Activated CD4-positive, alpha-beta memory T cell treated with anti-CD3 and anti-CD28 coated beads, Interleukin-2, amount 10 ng/mL, durations not matched to agents 7 days and 5 days (primary cell): ENCODE measurements at regions of chr16 and their contacts with region 1.

Region 1: DNA sequence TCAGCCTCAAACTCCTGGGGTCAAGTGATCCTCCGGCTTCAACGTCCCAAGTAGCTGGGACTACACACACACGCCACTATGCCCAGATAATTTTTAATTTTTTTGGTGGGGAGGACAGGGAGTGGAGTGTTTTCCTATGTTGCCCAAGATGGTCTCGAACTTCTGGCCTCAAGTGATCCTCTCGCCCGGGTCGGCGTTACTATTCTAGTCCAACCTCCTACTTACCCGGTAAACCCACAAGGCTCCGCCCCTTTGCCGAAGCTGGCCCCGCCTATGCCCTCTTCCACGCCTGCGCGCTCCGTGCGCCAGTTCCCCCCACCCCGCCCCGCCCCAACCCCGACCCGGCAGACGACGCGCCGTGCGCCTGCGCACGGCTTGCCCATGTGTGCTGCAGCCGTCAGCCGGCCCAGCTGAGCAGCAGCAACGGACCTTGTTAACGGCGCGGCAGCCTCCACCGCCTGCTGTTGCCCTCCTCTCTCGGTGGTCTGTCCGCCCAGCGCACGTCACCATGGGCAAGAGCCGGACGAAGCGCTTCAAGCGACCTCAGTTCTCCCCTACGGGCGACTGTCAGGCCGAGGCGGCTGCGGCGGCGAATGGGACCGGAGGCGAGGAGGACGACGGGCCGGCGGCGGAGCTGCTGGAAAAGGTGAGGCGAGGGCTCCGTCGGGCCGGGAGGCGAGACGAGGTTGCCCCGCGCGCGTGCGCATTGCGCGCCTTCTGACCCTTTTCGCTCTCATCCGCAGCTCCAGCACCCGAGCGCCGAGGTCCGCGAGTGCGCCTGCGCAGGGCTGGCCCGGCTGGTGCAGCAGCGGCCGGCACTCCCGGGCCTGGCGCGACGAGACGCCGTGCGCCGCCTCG is at the start of gene HEATR3:
- DNase-seq: peak; percentile 96
- H3K4me3 Mint-ChIP-seq: peak within 1 kb of the TSS; percentile 87
- H3K27ac Mint-ChIP-seq: peak within 1 kb of the TSS; percentile 92
- H3K4me1 Mint-ChIP-seq: peaks cover 42% of the 10 kb centered on the region
- H3K27me3 Mint-ChIP-seq: no peaks in the 10 kb centered on the region
- total RNA-seq, gene HEATR3: 20.7 to 21.3 TPM

Region 2: DNA sequence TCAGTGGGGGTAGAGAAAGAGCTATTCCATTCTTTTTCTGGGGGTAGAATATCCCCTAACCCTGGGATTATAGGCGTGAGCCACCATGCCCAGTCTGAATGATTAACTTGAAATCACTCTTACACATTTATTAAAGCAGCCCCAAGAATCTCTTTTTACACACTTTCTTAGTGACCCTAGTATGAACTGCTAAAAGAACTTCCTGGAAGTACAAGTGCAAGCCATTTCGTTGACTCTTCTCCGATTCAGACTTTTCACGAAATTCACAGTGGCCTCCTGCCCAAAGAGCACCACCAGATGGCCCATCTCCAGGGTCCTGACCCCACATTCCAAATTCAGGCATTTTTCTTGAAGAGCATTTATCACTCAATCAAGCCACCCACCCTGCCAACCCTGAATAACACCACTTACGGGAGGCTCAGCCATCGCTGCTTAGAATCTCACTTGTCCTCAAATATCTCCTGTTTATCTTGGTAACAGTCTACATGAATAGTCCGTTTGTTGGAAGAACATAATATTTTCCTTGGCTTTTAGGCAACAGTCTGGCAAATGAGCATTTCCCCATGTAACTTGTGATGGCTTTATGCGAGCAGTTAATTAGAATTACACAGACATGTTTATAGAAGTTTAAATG is 237.9 kb before region 1 on chr16:
- CTCF ChIA-PET with region 1: no interaction called
- POLR2A ChIA-PET with region 1: no interaction called
- DNase-seq: no peak
- H3K4me3 Mint-ChIP-seq: no peak overlapping the region
- H3K27ac Mint-ChIP-seq: no peak overlapping the region
- H3K4me1 Mint-ChIP-seq: no peaks in the 10 kb centered on the region
- H3K27me3 Mint-ChIP-seq: peaks cover 6% of the 10 kb centered on the region

Region 3: DNA sequence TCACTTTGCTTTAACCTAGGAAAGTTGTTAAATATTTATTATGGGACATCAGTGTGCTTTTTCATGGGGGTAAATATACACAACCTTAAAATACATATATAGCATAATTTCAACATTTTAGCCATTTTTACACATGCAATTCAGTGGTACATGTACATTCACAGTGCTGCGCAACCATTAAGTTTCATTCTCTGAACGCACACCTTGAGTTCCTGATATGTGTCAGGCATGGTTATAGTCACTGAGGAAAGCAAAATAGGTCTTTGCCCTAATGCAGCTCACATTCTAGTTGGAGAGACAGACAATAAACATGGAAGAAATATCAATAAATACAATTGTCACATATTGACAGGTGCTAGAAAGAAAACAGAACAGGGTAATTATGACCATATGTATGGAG is 53.7 kb before region 1 on chr16:
- CTCF ChIA-PET with region 1: no interaction called
- POLR2A ChIA-PET with region 1: no interaction called
- DNase-seq: no peak
- H3K4me3 Mint-ChIP-seq: no peak overlapping the region
- H3K27ac Mint-ChIP-seq: no peak overlapping the region
- H3K4me1 Mint-ChIP-seq: no peaks in the 10 kb centered on the region
- H3K27me3 Mint-ChIP-seq: peaks cover 2% of the 10 kb centered on the region

Region 4: DNA sequence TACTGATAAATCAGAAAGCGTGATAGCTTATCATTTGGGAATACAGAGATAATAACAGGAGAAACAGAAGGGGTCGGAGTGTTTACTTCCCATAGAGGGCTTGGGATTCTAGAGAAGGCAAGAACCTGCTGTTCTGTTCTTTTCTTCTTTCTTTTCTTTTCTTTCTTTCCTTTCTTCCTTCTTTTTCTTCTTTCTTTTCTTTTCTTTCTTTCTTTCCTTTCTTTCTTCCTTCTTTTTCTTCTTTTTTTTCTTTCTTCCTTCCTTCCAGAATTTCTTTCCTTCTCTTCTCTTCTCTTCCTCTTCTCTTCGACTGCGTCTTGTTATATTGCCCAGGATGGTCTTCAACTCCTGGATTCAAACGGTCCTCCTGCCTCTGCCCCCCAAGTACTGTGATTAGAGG is 22.5 kb before region 1 on chr16:
- CTCF ChIA-PET with region 1: no interaction called
- POLR2A ChIA-PET with region 1: no interaction called
- DNase-seq: no peak
- H3K4me3 Mint-ChIP-seq: no peak overlapping the region
- H3K27ac Mint-ChIP-seq: no peak overlapping the region
- H3K4me1 Mint-ChIP-seq: peaks cover 6% of the 10 kb centered on the region
- H3K27me3 Mint-ChIP-seq: peaks cover 19% of the 10 kb centered on the region

Region 5: DNA sequence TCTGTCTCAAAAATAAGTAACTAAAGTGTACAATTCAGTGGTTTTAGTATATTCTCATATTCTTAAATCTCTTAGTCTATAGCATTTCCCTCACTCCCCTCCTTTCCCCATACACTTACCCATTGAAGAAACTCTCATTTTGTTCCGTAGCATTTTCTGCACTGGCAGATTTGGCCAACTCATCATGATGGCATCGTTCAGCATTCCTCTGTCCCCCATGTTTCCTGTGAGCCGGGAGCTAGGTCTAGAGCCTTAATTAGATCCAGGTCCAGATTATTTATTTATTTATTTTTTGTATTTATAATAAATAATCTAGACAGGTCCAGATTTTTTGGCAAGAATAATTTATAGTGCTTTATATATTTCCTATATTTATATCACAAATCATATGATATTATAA is 30.9 kb after region 1 on chr16:
- CTCF ChIA-PET with region 1: no interaction called
- POLR2A ChIA-PET with region 1: no interaction called
- DNase-seq: no peak
- H3K4me3 Mint-ChIP-seq: no peak overlapping the region
- H3K27ac Mint-ChIP-seq: no peak overlapping the region
- H3K4me1 Mint-ChIP-seq: peaks cover 19% of the 10 kb centered on the region
- H3K27me3 Mint-ChIP-seq: no peaks in the 10 kb centered on the region

Region 6: DNA sequence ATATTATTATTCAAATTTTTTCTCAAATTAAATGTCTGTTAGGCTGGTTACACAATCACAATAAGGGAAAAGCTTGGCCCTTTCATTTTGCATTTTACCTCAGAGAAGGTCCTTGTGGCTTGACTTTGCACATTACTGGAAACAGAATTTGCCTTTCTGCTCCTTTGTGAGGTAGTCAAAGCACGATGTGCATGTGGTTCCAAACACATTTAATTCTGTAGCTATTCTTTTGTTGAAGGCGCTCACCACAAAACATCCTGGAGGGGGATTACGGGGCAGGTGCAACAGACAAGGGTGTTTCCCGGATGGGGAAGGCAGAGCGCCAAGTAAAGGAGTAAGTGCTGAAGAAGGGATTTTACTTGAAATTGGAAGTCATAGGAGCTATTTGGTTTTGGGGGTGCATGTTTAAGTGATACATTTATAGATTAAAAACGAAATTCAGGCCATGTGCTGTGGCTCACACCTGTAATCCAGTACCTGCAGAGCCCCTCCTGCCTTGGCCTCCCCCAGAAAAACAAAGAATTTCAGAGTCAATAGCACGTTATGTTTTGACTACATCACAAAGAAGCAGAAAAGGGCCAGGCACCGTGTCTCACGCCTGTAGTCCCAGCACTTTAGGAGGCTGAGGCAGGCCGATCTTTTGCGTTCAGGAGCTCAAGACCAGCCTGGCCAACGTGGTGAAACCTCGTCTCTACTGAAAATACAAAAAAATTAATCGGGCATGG is 56.0 kb after region 1 on chr16:
- CTCF ChIA-PET with region 1: interaction called, 13 read pairs
- POLR2A ChIA-PET with region 1: interaction called, 4 read pairs
- DNase-seq: peak; percentile 45
- H3K4me3 Mint-ChIP-seq: no peak overlapping the region
- H3K27ac Mint-ChIP-seq: peak overlapping the region; percentile 62
- H3K4me1 Mint-ChIP-seq: peaks cover 38% of the 10 kb centered on the region
- H3K27me3 Mint-ChIP-seq: no peaks in the 10 kb centered on the region

Region 7: DNA sequence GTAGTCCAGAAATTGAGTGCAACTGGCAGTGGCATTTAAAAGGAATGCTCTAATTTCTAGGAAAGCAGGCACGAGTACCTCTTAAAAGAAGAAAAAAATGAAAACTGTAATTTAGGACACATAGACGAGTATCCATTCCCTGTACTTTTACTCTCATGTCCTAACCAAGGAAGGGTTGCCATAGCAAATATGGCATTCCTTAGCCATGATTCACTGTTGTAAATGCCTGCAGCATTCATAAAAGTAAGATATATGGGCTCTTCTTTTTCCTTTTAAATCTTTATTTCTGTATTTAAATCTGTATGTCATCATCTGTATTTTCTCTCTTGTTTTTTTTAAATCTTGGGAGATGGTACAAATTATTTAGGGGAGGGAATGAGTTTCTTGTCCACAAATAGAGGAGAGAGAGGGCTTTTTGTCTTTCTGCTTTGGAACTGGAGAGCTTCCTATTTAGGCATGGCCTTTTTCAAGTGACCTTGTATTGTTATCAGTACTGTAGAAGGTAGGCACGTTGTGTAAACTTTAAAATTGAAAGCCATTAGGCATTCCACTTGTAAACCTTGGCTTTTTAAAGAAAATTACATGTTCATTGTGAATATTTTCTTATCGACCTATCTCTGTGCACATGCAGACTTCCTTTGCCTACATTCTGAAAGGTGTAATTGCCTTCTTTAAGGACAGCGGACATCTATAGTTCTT is 137.2 kb after region 1 on chr16:
- CTCF ChIA-PET with region 1: interaction called, 11 read pairs
- POLR2A ChIA-PET with region 1: interaction called, 5 read pairs
- DNase-seq: no peak
- H3K4me3 Mint-ChIP-seq: no peak overlapping the region
- H3K27ac Mint-ChIP-seq: no peak overlapping the region
- H3K4me1 Mint-ChIP-seq: peaks cover 42% of the 10 kb centered on the region
- H3K27me3 Mint-ChIP-seq: no peaks in the 10 kb centered on the region